ENCODE measurements at regions of chr9 and their contacts with region 1.

Region 1: DNA sequence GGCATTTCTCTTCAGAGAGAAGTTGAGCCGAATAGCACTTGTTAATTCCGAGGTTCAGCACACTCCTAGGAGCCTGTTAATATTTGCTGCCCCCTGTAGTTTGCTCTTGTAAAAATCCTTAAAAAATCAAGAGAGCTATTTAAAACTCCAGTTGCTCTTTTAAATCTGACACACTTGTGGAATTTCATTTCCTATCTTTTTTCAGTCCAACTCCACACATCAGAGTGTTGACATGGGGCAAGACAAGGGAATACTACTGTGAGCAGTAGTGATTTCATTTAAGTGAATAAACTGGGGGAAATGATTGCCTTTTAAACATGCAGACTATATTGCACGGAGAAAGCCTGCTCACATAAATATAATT is 1096.3 kb upstream of the DMAC1 start:
- DNase-seq: peak; percentile 16
- ATAC-seq: peak; percentile 67; the same call in 1 of the 2 replicates
- H3K4me3 ChIP-seq: no peak overlapping the region
- H3K27ac ChIP-seq: no peak overlapping the region
- H3K4me1 ChIP-seq: no peaks in the 10 kb centered on the region
- H3K27me3 ChIP-seq: no peaks in the 10 kb centered on the region
- CTCF ChIP-seq: peak; percentile 28; the same call in 1 of the 2 replicates
- POLR2A ChIP-seq: no peak
- RAD21 ChIP-seq: peak; percentile 24; the same call in 1 of the 2 replicates

Region 2: DNA sequence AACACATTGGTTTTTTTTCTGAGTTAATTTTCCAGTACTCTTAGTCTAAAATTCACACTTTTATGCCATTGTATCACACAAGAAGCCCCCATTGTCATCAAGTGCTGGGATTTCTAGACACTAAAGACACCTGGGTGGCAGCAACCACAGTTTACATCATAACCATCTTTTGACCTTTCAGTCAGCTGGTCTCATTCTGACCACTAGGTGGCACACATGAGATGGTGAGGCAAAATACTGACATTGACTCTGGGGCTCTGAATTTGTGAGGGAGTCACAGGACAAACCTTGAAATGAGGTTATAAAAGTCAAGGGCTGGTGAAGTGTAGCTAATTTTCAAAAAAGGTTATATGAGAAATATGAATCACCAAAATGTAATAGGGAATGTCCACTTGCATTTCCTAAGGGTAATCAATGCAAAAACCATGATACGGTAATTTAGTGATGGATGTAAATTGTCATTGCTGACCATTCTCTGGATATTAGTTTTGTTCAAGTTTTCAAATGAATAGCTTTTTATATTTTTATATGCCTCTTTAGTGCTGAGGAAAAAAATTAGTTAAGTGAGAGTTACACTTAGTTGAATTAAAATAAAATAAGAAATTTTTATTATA is 1325.6 kb before region 1 on chr9:
- CTCF ChIA-PET with region 1: no interaction called
- POLR2A ChIA-PET with region 1: no interaction called
- dilution Hi-C with region 1: no loop called
- in situ Hi-C with region 1: no loop called
- intact Hi-C with region 1: loop called (anchors 2 kb)
- DNase-seq: peak; percentile 33
- ATAC-seq: peak; percentile 68; the same call in 1 of the 2 replicates
- H3K4me3 ChIP-seq: no peak overlapping the region
- H3K27ac ChIP-seq: no peak overlapping the region
- H3K4me1 ChIP-seq: no peaks in the 10 kb centered on the region
- H3K27me3 ChIP-seq: no peaks in the 10 kb centered on the region
- CTCF ChIP-seq: peak; percentile 44
- POLR2A ChIP-seq: no peak
- RAD21 ChIP-seq: peak; percentile 45; the same call in 1 of the 2 replicates

Region 3: DNA sequence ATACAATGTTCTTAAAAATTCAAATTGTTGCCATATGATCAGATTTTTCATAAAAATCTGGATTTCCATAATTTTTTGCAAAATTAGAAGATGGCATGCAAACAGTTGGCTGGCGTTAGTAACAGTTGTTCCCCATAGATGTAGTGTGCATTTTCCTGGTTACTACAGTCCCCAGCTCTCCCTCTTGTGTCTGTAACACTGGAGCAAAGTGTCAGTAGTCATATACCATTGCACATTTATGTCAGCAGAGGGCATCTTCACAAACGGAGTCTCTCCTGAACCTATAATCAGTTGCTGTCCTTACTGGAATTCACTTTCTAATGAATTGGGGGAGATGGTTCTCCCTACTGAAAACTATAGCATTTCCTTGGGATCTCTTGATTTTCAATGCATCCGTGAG is 1051.6 kb before region 1 on chr9:
- CTCF ChIA-PET with region 1: no interaction called
- POLR2A ChIA-PET with region 1: no interaction called
- dilution Hi-C with region 1: no loop called
- in situ Hi-C with region 1: no loop called
- intact Hi-C with region 1: loop called (anchors 5 kb)
- DNase-seq: peak; percentile 7
- ATAC-seq: peak; percentile 67
- H3K4me3 ChIP-seq: no peak overlapping the region
- H3K27ac ChIP-seq: no peak overlapping the region
- H3K4me1 ChIP-seq: no peaks in the 10 kb centered on the region
- H3K27me3 ChIP-seq: no peaks in the 10 kb centered on the region
- CTCF ChIP-seq: 0 out of 2 replicates have a peak, but pooled peaks have one; percentile 18
- POLR2A ChIP-seq: no peak
- RAD21 ChIP-seq: no peak

Region 4: DNA sequence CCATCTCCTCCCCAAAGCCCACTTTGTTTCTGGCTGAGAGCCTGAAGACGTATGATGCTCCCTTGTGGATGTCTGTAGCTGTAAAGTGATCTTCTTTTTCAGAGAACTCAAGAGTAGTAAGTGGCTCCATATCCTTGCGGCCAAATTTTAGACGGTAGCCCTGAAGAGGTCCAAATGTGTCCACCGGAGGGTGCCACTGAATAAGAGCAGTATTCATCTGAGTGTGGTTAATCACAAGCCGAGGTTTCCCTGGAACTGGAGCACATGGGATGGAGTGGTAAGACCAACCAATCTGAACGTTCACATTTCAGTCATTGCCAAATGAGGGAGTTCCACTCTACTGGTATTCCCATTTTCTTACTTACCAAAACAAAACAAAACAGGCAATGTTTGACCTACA is 409.7 kb before region 1 on chr9:
- CTCF ChIA-PET with region 1: no interaction called
- POLR2A ChIA-PET with region 1: no interaction called
- dilution Hi-C with region 1: no loop called
- in situ Hi-C with region 1: no loop called
- intact Hi-C with region 1: loop called (anchors 5 kb)
- DNase-seq: no peak
- ATAC-seq: no peak
- H3K4me3 ChIP-seq: no peak overlapping the region
- H3K27ac ChIP-seq: no peak overlapping the region
- H3K4me1 ChIP-seq: no peaks in the 10 kb centered on the region
- H3K27me3 ChIP-seq: no peaks in the 10 kb centered on the region
- CTCF ChIP-seq: no peak
- POLR2A ChIP-seq: no peak
- RAD21 ChIP-seq: no peak

Region 5: GRCh38 chr9:8924562-8924961 is 28.7 kb after region 1 on chr9:
- CTCF ChIA-PET with region 1: no interaction called
- POLR2A ChIA-PET with region 1: no interaction called
- dilution Hi-C with region 1: no loop called
- in situ Hi-C with region 1: no loop called
- intact Hi-C with region 1: no loop called
- DNase-seq: no peak
- ATAC-seq: no peak
- H3K4me3 ChIP-seq: no peak overlapping the region
- H3K27ac ChIP-seq: no peak overlapping the region
- H3K4me1 ChIP-seq: no peaks in the 10 kb centered on the region
- H3K27me3 ChIP-seq: no peaks in the 10 kb centered on the region
- CTCF ChIP-seq: no peak
- POLR2A ChIP-seq: no peak
- RAD21 ChIP-seq: no peak

Region 6: GRCh38 chr9:8963885-8964284 is 68.0 kb after region 1 on chr9:
- CTCF ChIA-PET with region 1: no interaction called
- POLR2A ChIA-PET with region 1: no interaction called
- dilution Hi-C with region 1: no loop called
- in situ Hi-C with region 1: no loop called
- intact Hi-C with region 1: no loop called
- DNase-seq: no peak
- ATAC-seq: no peak
- H3K4me3 ChIP-seq: no peak overlapping the region
- H3K27ac ChIP-seq: no peak overlapping the region
- H3K4me1 ChIP-seq: no peaks in the 10 kb centered on the region
- H3K27me3 ChIP-seq: no peaks in the 10 kb centered on the region
- CTCF ChIP-seq: no peak
- POLR2A ChIP-seq: no peak
- RAD21 ChIP-seq: no peak